ENCODE measurements at regions of chr11 and their contacts with region 1.

Region 1: GRCh38 chr11:86047275-86047991 is 21.5 kb downstream of the PICALM start:
- DNase-seq: peak; percentile 75
- ATAC-seq: peak; percentile 73
- H3K4me3 Mint-ChIP-seq: peak overlapping the region; percentile 65
- H3K27ac Mint-ChIP-seq: peak overlapping the region; percentile 96
- H3K4me1 Mint-ChIP-seq: peaks cover 96% of the 10 kb centered on the region
- H3K27me3 Mint-ChIP-seq: no peaks in the 10 kb centered on the region

Region 2: DNA sequence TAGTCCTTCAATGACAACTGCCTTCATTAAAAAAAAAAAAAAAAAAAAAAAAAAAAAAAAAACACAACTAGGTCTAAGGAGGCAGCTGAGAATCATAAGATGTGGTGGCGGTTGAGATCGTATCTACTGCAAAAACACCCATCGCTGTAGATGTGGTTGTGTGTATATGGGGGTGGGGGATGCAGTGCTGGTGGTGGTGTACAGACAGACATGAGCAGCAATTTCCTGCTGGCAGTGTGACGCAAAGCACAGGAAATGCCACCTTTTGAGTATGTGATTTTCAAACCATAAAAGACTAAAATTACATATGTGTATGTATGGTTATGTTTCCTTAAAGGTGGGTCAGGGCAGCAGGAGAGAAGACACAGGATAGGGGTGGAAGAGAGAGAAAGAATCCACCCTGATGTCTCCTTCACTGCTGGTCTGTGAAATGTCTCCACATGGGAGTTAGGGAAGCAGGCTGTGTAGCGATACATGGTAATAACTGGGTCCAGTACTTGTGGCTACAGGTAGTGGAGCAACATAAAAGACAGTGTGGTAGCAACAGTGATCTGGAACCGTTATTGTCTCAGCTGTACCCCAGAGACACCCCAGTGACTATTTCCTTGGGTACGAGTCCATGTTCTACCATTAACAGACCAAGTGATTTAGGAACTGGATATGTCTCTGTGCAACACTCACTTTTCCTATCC is 294.4 kb before region 1 on chr11:
- CTCF ChIA-PET with region 1: interaction called, 3 read pairs
- POLR2A ChIA-PET with region 1: no interaction called
- intact Hi-C with region 1: loop called in 1 of 2 experiments (anchors 5 kb)
- DNase-seq: peak; percentile 90
- ATAC-seq: peak; percentile 89
- H3K4me3 Mint-ChIP-seq: peak overlapping the region; percentile 47
- H3K27ac Mint-ChIP-seq: peak overlapping the region; percentile 94
- H3K4me1 Mint-ChIP-seq: peaks cover 91% of the 10 kb centered on the region
- H3K27me3 Mint-ChIP-seq: no peaks in the 10 kb centered on the region

Region 3: GRCh38 chr11:86116386-86116726 is 68.9 kb after region 1 on chr11:
- CTCF ChIA-PET with region 1: no interaction called
- POLR2A ChIA-PET with region 1: no interaction called
- intact Hi-C with region 1: loop called in 1 of 2 experiments (anchors 2 kb)
- DNase-seq: peak; percentile 52
- ATAC-seq: peak; percentile 95
- H3K4me3 Mint-ChIP-seq: peak overlapping the region; percentile 0
- H3K27ac Mint-ChIP-seq: peak overlapping the region; percentile 66
- H3K4me1 Mint-ChIP-seq: peaks cover 32% of the 10 kb centered on the region
- H3K27me3 Mint-ChIP-seq: peaks cover 7% of the 10 kb centered on the region

Region 4: GRCh38 chr11:86182976-86183584 is 135.6 kb after region 1 on chr11:
- CTCF ChIA-PET with region 1: interaction called, 4 read pairs
- POLR2A ChIA-PET with region 1: interaction called, 3 read pairs
- intact Hi-C with region 1: loop called in 1 of 2 experiments (anchors 1 kb)
- DNase-seq: peak; percentile 89
- ATAC-seq: peak; percentile 84
- H3K4me3 Mint-ChIP-seq: no peak overlapping the region
- H3K27ac Mint-ChIP-seq: no peak overlapping the region
- H3K4me1 Mint-ChIP-seq: peaks cover 6% of the 10 kb centered on the region
- H3K27me3 Mint-ChIP-seq: no peaks in the 10 kb centered on the region

Region 5: GRCh38 chr11:86230921-86231430 is 183.5 kb after region 1 on chr11:
- CTCF ChIA-PET with region 1: interaction called, 7 read pairs
- POLR2A ChIA-PET with region 1: no interaction called
- intact Hi-C with region 1: loop called (anchors 1 kb)
- DNase-seq: no peak
- ATAC-seq: peak; percentile 28
- H3K4me3 Mint-ChIP-seq: peak overlapping the region; percentile 20
- H3K27ac Mint-ChIP-seq: peak overlapping the region; percentile 86
- H3K4me1 Mint-ChIP-seq: peaks cover 65% of the 10 kb centered on the region
- H3K27me3 Mint-ChIP-seq: no peaks in the 10 kb centered on the region

Measured in activated CD4-positive, alpha-beta T cell treated with anti-CD3 and anti-CD28 coated beads for 36 hours (primary cell).